PC-9 (cell line): ENCODE measurements at regions of chr7 and their contacts with region 1.

Region 1: GRCh38 chr7:128883622-128884501 is 21.2 kb downstream of the ATP6V1F start:
- DNase-seq: peak in 1 of 2 experiments; percentile 84
- H3K4me3 ChIP-seq: no peak overlapping the region
- H3K27ac ChIP-seq: no peak overlapping the region
- H3K4me1 ChIP-seq: peaks cover 17% of the 10 kb centered on the region
- H3K27me3 ChIP-seq: no peaks in the 10 kb centered on the region
- CTCF ChIP-seq: peak; percentile 96

Region 2: DNA sequence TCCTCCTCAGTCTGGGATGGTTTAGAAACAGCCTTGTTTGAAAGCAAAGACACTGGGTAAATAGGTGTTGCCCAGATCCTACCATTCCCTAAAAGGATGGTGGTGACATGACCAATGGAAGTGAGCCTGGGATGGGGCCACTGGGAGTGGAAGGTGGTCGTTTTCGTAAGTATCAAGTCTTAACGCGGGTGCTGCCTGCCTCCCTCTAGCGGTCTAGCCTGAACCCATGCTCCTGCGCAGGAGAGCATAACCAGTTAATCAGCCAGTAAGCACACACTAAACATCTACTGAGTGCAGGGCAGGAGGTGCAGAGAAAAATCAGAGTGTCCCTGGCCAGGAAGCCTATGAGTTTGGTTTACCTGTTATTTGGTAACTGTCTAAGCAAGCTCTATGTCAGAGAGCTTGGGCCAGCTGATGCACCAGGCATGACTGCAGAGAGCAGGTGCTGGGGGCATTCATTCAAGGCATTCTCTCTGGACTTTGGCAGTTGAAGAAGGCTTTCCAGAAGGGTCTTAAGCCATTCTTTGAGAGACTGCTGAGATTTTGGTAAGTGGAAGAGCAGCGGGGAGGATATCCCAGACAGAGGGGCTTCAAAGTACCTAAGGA is 210.8 kb before region 1 on chr7:
- CTCF ChIA-PET with region 1: no interaction called
- POLR2A ChIA-PET with region 1: no interaction called
- intact Hi-C with region 1: no loop called
- DNase-seq: no peak
- H3K4me3 ChIP-seq: no peak overlapping the region
- H3K27ac ChIP-seq: no peak overlapping the region
- H3K4me1 ChIP-seq: no peaks in the 10 kb centered on the region
- H3K27me3 ChIP-seq: no peaks in the 10 kb centered on the region
- CTCF ChIP-seq: no peak

Region 3: DNA sequence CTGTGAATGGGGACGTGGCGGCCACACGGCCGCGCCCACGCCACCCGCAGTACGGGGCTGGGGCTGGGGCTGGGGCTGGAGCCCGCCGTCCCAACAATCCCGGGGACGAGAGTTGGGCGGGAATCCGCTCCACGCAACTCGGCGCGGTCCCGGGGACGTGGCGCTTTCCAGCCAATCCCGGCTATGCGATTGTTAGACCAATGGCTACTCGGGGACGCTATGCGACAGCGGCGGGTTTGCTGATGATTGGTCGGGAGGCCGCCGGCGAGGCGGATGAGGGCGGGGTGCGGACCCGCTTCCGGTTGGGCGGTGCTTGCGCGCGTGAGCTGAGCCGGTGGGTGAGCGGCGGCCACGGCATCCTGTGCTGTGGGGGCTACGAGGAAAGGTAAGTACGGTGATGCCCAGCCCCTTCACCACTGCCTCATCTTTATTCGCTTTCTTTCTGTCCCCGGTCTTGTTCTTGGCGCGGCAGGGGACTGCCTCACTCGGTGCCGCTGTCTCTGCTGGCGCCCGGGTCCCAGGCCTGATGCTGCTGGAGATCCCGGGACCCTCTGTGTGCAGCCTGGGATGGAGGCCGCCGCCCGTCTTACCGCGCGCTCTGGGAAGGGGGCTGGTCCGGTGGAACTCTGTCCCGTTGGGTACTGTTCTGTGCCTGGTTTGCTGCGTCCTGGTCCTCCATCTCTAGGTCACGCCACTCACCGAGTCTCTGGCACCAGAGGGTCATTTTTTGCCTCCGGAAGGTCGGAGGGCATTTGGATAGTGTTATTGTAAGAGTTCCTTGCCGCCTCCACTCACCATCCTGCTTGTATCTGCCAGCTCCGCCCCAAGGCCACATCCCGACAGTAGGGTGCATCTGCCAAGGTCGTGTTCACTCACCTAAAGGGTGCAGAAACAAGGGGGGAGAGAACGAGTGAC is 144.6 kb before region 1 on chr7 and contains the start of gene CALU:
- CTCF ChIA-PET with region 1: interaction called, 11 read pairs
- POLR2A ChIA-PET with region 1: no interaction called
- intact Hi-C with region 1: no loop called
- DNase-seq: peak; percentile 90 to 97
- H3K4me3 ChIP-seq: peak within 1 kb of the TSS; percentile 83
- H3K27ac ChIP-seq: peak within 1 kb of the TSS; percentile 81
- H3K4me1 ChIP-seq: peaks cover 41% of the 10 kb centered on the region
- H3K27me3 ChIP-seq: no peaks in the 10 kb centered on the region
- CTCF ChIP-seq: no peak
- total RNA-seq, gene CALU: 109 and 152 TPM in 2 replicates

Region 4: DNA sequence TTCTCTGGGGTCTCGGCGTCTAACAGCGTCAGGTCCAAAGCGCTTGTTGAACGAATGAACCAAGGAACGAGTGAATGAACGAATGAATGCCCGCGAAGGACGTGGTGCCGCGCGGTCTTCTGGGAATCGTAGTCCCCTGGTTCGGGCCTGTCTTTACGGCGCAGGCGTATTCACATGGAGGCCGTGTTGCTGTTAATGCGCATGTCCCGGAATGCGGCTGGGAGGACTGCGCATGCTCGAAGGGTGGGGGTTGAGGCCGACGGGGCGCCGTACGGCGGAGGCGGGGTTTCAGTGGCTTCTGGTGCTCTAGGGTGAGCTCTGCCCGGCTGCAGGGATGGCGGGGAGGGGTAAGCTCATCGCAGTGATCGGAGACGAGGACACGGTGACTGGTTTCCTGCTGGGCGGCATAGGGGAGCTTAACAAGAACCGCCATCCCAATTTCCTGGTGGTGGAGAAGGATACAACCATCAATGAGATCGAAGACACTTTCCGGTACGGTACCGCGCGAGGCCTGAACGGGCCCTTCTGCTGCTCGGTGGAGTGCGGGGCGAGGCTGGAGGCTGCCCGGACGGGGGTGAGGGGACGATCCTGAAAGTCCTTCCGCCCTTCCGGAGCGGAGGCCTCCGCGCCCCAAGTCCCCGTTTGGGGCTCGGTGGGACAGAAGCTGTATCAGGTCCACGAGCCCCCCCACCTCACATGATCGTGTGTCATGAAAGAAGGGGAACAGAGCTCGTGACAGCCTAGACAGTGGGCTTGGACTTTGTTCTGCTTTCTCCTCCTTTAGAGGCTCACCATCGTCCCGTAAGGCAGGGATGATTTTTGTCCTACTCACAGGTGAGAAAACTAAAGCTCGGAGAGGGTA is 21.1 kb before region 1 on chr7 and contains the start of gene ATP6V1F:
- CTCF ChIA-PET with region 1: interaction called, 13 read pairs
- POLR2A ChIA-PET with region 1: interaction called, 4 read pairs
- intact Hi-C with region 1: no loop called
- DNase-seq: peak; percentile 88 to 99
- H3K4me3 ChIP-seq: peak within 1 kb of the TSS; percentile 71
- H3K27ac ChIP-seq: no peak within 1 kb of the TSS
- H3K4me1 ChIP-seq: peaks cover 10% of the 10 kb centered on the region
- H3K27me3 ChIP-seq: no peaks in the 10 kb centered on the region
- CTCF ChIP-seq: no peak
- total RNA-seq, gene ATP6V1F: 114 and 169 TPM in 2 replicates

Region 5: GRCh38 chr7:128919881-128920799 is 36.3 kb after region 1 on chr7:
- CTCF ChIA-PET with region 1: no interaction called
- POLR2A ChIA-PET with region 1: no interaction called
- intact Hi-C with region 1: no loop called
- DNase-seq: no peak
- H3K4me3 ChIP-seq: no peak overlapping the region
- H3K27ac ChIP-seq: no peak overlapping the region
- H3K4me1 ChIP-seq: peaks cover 5% of the 10 kb centered on the region
- H3K27me3 ChIP-seq: peaks cover 19% of the 10 kb centered on the region
- CTCF ChIP-seq: no peak

Region 6: GRCh38 chr7:129091484-129092002 is 207.7 kb after region 1 on chr7:
- CTCF ChIA-PET with region 1: no interaction called
- POLR2A ChIA-PET with region 1: interaction called, 11 read pairs
- intact Hi-C with region 1: loop called (anchors 1 kb)
- DNase-seq: peak; percentile 51 to 90
- H3K4me3 ChIP-seq: no peak overlapping the region
- H3K27ac ChIP-seq: no peak overlapping the region
- H3K4me1 ChIP-seq: no peaks in the 10 kb centered on the region
- H3K27me3 ChIP-seq: no peaks in the 10 kb centered on the region
- CTCF ChIP-seq: peak; percentile 94

Region 7: GRCh38 chr7:129865093-129865933 is 981.5 kb after region 1 on chr7:
- CTCF ChIA-PET with region 1: no interaction called
- POLR2A ChIA-PET with region 1: interaction called, 31 read pairs
- intact Hi-C with region 1: no loop called
- DNase-seq: peak; percentile 11 to 80
- H3K4me3 ChIP-seq: 0 out of 2 replicates have a peak overlapping the region, but pooled peaks have one; percentile 16
- H3K27ac ChIP-seq: peak overlapping the region; percentile 96
- H3K4me1 ChIP-seq: peaks cover 58% of the 10 kb centered on the region
- H3K27me3 ChIP-seq: no peaks in the 10 kb centered on the region
- CTCF ChIP-seq: no peak